ENCODE measurements at regions of chr6 and their contacts with region 1.

Region 1: DNA sequence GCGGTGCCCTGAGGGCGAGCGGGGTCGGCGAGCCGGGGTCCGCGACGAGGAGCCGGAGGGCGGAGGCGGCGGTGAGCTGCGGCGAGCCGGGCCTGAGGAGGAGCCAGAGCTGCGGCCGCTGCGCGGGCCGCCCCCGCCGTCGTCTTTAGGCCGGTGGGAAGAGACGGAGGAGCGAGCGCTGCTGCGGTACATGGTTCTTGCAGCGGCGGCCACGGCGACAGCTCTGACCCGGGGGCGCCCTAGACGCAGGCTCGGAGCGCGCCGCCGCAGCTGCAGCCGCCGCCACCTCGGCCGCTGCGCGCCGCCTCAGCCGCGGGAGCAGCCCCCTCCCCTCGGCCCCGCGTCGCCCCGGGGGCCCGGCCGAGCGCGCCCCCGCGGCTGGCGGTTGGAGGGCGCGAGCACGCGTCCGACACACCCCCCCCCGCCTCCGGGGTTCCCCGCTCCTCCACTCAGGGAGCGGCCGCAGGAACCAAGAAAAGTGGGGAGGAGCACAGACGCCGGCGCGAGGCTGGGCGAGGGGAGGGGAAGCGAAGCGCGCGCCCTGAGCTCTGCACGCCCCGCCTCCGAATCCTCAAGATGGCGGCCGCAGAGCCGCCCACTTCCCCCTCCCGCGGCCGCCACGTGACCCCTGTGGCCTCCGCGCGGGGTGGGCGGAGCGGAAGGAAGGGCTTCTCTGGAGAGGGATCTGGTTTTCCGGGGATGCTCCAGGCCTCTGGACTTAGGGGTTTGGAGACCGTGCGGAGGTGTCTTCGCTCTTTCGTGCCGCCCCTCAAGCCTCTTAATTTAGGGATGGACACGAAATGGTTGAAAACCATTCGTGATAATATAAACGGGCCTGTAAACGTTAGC is at the start of gene ZNF318:
- DNase-seq: peak; percentile 98
- H3K4me3 ChIP-seq: peak within 1 kb of the TSS; percentile 80
- H3K27ac ChIP-seq: peak within 1 kb of the TSS; percentile 75
- H3K4me1 ChIP-seq: peaks cover 71% of the 10 kb centered on the region
- CTCF ChIP-seq: no peak
- total RNA-seq, gene ZNF318: 12.8 and 15.7 TPM in 2 replicates

Region 2: GRCh38 chr6:43297644-43298564 is 71.5 kb before region 1 on chr6 and contains the start of gene SLC22A7:
- CTCF ChIA-PET with region 1: no interaction called
- POLR2A ChIA-PET with region 1: no interaction called
- intact Hi-C with region 1: no loop called
- DNase-seq: no peak
- H3K4me3 ChIP-seq: no peak within 1 kb of the TSS
- H3K27ac ChIP-seq: no peak within 1 kb of the TSS
- H3K4me1 ChIP-seq: peaks cover 8% of the 10 kb centered on the region
- CTCF ChIP-seq: no peak
- total RNA-seq, gene SLC22A7: not detected in 2 replicates

Region 3: DNA sequence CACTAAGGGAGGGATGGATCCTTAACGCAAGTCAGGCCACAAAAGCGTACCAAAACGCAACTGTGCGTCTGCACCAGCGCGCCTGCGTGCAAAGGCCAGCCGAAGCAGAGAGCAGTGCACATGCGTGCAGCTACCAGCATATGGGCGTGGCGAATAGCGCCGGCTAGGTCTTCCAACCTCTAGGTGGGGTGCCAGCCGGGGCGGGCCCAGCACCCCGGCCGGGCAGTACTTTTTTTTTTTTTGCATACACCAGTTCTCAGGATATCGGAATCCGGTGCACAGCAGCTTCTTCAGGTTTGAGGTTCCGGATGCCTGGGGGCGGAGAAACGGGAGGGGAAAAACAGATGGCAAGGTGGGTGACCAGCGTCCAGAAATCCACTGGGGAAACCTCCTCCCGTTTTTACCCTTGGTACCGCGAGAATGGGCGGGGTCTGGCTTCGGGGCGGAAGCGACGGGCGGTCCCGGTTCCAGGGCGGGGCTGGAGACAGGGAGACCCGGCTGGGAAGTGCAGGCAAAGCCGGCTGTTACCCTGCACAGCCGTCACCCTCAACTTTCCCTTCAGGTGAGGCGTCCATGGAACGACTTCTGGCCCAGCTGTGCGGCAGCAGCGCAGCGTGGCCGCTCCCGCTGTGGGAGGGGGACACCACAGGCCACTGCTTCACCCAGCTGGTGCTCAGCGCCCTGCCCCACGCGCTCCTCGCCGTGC is 58.2 kb after region 1 on chr6 and contains the start of gene ABCC10:
- CTCF ChIA-PET with region 1: no interaction called
- POLR2A ChIA-PET with region 1: interaction called, 3 read pairs
- intact Hi-C with region 1: loop called (anchors 1 kb)
- DNase-seq: peak; percentile 95
- H3K4me3 ChIP-seq: peak within 1 kb of the TSS; percentile 84
- H3K27ac ChIP-seq: peak within 1 kb of the TSS; percentile 57
- H3K4me1 ChIP-seq: peaks cover 21% of the 10 kb centered on the region
- CTCF ChIP-seq: peak; percentile 72
- total RNA-seq, gene ABCC10: 11.4 and 12.4 TPM in 2 replicates